Activated T-helper 2 cell treated with anti-CD3 and anti-CD28 coated beads, Interferon-gamma antibody, Interleukin-2, Interleukin-4, amounts not matched to agents 10 μg/mL and 5 μg/mL and 100 μg/mL, durations not matched to agents 14 hours and 24 hours and 36 hours (primary cell): ENCODE measurements at regions of chr20 and their contacts with region 1.

Region 1: GRCh38 chr20:208942-209566 is 18.0 kb upstream of the DEFB129 start:
- DNase-seq: no peak
- H3K4me3 Mint-ChIP-seq: no peak overlapping the region
- H3K27ac Mint-ChIP-seq: no peak overlapping the region
- H3K4me1 Mint-ChIP-seq: peaks cover 3% of the 10 kb centered on the region
- H3K27me3 Mint-ChIP-seq: peaks cover 26% of the 10 kb centered on the region

Region 2: DNA sequence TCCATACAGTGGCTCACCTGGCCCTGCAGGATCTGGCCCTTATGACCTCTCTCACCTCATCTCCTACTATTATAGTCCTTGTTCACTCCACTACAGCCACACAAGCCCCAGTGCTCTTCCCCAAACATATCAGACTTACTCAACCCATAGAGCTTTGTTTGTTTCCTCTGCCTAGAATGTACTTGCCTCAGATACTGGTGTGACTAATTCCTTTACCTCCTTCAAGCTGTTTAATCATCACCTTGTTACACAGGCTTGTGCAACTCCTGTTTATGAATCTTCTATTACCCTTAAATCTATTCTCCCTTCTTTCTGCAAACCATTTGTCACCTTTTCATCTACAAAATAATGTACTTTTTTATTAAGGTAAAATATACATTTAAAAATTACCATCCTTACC is 118.4 kb before region 1 on chr20:
- intact Hi-C with region 1: no loop called
- DNase-seq: no peak
- H3K4me3 Mint-ChIP-seq: no peak overlapping the region
- H3K27ac Mint-ChIP-seq: no peak overlapping the region
- H3K4me1 Mint-ChIP-seq: no peaks in the 10 kb centered on the region
- H3K27me3 Mint-ChIP-seq: peaks cover 19% of the 10 kb centered on the region

Region 3: GRCh38 chr20:330233-331149 is 121.4 kb after region 1 on chr20:
- intact Hi-C with region 1: loop called (anchors 2 kb)
- DNase-seq: peak; percentile 51
- H3K4me3 Mint-ChIP-seq: no peak overlapping the region
- H3K27ac Mint-ChIP-seq: no peak overlapping the region
- H3K4me1 Mint-ChIP-seq: peaks cover 19% of the 10 kb centered on the region
- H3K27me3 Mint-ChIP-seq: no peaks in the 10 kb centered on the region